ENCODE measurements at regions of chrX and their contacts with region 1.

Region 1: DNA sequence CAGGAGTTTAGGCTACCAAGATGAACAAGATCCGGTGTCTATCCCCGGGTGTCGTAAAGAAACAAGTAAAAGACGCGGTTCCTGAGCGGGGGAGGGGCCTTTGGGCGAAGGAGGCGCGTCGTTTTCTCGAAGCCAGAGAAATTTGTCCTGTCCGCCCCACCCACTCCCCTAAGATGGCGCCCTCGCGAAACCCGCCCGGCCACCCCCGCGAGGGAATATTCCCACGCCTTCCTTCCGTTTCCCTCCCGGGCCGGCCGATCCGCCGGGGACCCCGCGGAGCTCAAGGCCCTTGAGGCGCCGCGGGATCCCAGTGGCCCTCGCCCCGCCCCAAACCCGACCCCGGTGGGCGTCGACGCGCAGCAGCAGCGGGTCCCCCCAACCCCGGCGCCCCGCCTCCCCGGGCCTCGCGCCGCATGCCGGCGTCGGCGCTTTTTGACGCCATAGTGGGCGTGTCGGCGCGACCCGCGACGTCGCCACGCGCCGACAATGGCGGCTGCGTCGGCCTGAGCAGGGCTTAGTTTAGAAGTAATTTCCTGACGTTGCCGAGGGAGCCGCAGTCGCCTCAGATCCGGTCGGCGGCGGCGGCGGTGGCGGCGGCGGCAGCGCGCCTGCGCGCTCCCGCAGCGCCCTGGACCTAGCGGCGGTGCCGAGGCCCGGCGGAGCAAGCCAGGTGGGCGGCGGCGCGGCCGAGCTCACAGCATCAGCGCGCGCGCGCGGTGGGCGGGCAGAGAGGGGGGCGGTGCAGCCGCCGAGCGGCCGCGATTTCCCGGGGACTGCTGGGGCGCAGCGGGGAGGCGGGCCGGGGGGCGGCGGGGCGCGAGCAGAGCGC is at the start of gene HTATSF1:
- DNase-seq: peak; percentile 65 to 81
- ATAC-seq: peak; percentile 89 to 91
- H3K4me3 ChIP-seq: peak within 1 kb of the TSS; percentile 69 to 78 (median 71)
- H3K27ac ChIP-seq: peak within 1 kb of the TSS; percentile 83 to 96 (median 94)
- H3K4me1 ChIP-seq: peaks cover 11% of the 10 kb centered on the region in 2 donors
- H3K27me3 ChIP-seq: no peaks in the 10 kb centered on the region
- CTCF ChIP-seq: no peak
- POLR2A ChIP-seq: peak; percentile 29 to 45
- total RNA-seq, gene HTATSF1: 97.5 to 157 (median 114) TPM

Region 2: DNA sequence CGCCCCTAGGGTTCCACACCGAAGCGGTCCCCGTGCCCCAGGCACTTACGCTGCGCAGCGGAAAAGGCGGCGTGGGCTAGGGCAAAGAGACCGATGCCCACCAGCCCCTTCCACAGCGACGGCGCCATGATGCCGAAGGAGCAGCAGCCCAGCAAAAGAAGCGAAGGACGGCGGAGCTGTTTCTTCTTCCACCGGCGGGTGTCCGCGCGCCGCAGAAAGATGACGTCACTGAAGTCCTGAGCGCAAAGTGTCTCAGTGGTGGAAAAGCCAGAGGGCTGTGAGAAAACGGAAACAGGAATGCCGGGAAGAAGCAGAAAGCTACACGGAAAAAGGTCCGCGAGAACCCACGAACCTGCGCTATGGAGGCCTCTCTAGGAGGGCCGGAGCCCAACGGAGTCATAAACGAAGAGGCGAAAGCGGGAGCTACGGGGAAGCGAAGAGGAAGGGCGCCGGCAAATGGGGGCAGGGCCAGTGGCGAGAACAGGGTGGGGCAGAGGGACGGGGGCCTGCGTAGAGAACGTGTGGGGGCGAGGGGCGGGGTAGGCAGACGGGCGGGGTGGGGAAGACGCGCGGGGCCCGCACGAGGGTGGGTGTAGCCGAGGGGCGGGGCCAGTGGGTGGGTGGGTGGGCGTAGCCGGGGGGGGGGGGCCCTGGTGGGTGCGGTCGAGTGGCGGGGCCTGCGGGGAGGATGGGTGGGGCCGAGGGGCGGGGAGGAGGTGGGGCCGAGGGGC is 523.3 kb before region 1 on chrX and contains the start of gene MMGT1:
- in situ Hi-C with region 1: no loop called
- intact Hi-C with region 1: loop called (anchors 10 kb)
- DNase-seq: peak; percentile 67 to 72
- ATAC-seq: peak; percentile 92 to 93
- H3K4me3 ChIP-seq: peak within 1 kb of the TSS; percentile 70 to 84 (median 75)
- H3K27ac ChIP-seq: peak within 1 kb of the TSS; percentile 91 to 94 (median 92)
- H3K4me1 ChIP-seq: peaks cover 6 to 8% of the 10 kb centered on the region in 2 donors
- H3K27me3 ChIP-seq: no peaks in the 10 kb centered on the region
- CTCF ChIP-seq: peak in 1 of 5 experiments; percentile 3
- POLR2A ChIP-seq: peak; percentile 39 to 41
- total RNA-seq, gene MMGT1: 20.6 to 29.2 (median 23.5) TPM

Region 3: DNA sequence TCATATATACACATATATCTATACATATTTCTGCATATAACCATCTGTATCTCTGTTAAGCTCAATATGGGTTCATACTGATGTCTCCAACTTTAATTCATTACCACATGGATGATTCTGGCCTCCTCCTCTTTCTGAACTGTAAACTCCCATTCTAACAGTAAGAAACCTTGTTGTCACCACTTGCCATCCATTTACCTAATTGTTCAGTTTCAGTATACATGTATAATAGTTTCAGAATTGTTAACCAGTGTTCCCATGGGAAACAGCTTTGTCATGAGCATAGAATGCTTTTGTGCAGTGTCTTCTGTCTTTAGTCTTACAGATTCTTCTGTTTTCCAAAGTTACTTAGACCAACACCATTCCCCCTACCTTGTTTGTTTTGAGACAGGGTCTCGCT is 475.8 kb before region 1 on chrX:
- in situ Hi-C with region 1: loop called in 1 of 4 experiments (anchors 25 kb)
- intact Hi-C with region 1: no loop called
- DNase-seq: no peak
- ATAC-seq: no peak
- H3K4me3 ChIP-seq: no peak overlapping the region
- H3K27ac ChIP-seq: no peak overlapping the region
- H3K4me1 ChIP-seq: no peaks in the 10 kb centered on the region
- H3K27me3 ChIP-seq: no peaks in the 10 kb centered on the region
- CTCF ChIP-seq: no peak
- POLR2A ChIP-seq: no peak

Region 4: GRCh38 chrX:136168929-136169735 is 327.9 kb before region 1 on chrX:
- in situ Hi-C with region 1: no loop called
- intact Hi-C with region 1: loop called (anchors 5 kb)
- DNase-seq: peak in 1 of 2 donors; percentile 35
- ATAC-seq: peak; percentile 16 to 78
- H3K4me3 ChIP-seq: peak overlapping the region in 1 of 4 donors; percentile 18
- H3K27ac ChIP-seq: peak overlapping the region; percentile 78 to 92 (median 84)
- H3K4me1 ChIP-seq: peaks cover 7 to 29% of the 10 kb centered on the region in 2 donors
- H3K27me3 ChIP-seq: no peaks in the 10 kb centered on the region
- CTCF ChIP-seq: no peak
- POLR2A ChIP-seq: no peak

Region 5: DNA sequence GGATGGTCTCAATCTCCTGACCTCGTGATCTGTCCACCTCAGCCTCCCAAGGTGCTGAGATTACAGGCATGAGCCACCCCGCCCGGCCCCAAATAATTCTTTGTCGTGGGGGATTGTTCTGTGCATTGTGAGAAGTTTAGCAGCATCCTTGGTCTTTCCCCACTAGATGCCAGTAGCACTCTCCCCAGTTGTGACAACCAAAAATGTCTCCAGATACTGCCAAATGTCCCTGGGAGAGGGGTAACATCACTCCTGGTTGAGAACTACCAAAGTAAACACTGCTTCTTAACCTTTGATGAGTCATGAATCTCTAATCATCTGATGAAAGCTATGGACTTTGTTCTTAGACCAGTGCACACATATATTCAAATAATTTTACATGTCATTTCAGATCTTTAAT is 100.0 kb before region 1 on chrX:
- in situ Hi-C with region 1: loop called in 1 of 4 experiments (anchors 25 kb)
- intact Hi-C with region 1: no loop called
- DNase-seq: no peak
- ATAC-seq: no peak
- H3K4me3 ChIP-seq: no peak overlapping the region
- H3K27ac ChIP-seq: no peak overlapping the region
- H3K4me1 ChIP-seq: no peaks in the 10 kb centered on the region
- H3K27me3 ChIP-seq: no peaks in the 10 kb centered on the region
- CTCF ChIP-seq: no peak
- POLR2A ChIP-seq: no peak

Region 6: DNA sequence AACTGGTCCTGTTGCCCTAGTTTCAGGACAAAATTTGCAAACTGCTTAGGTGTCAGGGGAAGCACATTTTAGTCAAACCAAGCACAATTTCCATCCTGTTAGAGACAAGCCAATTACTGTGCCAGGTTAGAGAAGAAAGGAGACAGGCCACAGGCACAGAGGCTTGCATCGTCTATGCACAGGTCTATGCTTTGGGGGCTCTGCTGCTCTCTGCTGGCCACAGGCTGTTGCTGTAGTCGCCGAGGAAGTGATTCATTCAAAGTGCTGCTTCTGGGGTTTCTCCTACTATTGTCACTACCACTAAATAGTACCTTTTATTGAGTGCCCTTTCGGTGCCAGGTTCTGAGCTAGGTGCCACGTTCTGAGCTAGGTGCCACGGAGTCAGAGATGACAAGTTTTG is 80.6 kb after region 1 on chrX:
- in situ Hi-C with region 1: no loop called
- intact Hi-C with region 1: loop called (anchors 1 kb)
- DNase-seq: peak; percentile 3 to 17
- ATAC-seq: peak; percentile 70 to 72
- H3K4me3 ChIP-seq: no peak overlapping the region
- H3K27ac ChIP-seq: no peak overlapping the region
- H3K4me1 ChIP-seq: no peaks in the 10 kb centered on the region
- H3K27me3 ChIP-seq: no peaks in the 10 kb centered on the region
- CTCF ChIP-seq: peak; percentile 15 to 63 (median 41)
- POLR2A ChIP-seq: no peak

Region 7: GRCh38 chrX:136896121-136896914 is 399.3 kb after region 1 on chrX:
- in situ Hi-C with region 1: no loop called
- intact Hi-C with region 1: no loop called
- DNase-seq: no peak
- ATAC-seq: no peak
- H3K4me3 ChIP-seq: no peak overlapping the region
- H3K27ac ChIP-seq: no peak overlapping the region
- H3K4me1 ChIP-seq: no peaks in the 10 kb centered on the region
- H3K27me3 ChIP-seq: no peaks in the 10 kb centered on the region
- CTCF ChIP-seq: no peak
- POLR2A ChIP-seq: no peak